Endothelial cell of umbilical vein (primary cell): ENCODE measurements at regions of chr2 and their contacts with region 1.

Region 1: DNA sequence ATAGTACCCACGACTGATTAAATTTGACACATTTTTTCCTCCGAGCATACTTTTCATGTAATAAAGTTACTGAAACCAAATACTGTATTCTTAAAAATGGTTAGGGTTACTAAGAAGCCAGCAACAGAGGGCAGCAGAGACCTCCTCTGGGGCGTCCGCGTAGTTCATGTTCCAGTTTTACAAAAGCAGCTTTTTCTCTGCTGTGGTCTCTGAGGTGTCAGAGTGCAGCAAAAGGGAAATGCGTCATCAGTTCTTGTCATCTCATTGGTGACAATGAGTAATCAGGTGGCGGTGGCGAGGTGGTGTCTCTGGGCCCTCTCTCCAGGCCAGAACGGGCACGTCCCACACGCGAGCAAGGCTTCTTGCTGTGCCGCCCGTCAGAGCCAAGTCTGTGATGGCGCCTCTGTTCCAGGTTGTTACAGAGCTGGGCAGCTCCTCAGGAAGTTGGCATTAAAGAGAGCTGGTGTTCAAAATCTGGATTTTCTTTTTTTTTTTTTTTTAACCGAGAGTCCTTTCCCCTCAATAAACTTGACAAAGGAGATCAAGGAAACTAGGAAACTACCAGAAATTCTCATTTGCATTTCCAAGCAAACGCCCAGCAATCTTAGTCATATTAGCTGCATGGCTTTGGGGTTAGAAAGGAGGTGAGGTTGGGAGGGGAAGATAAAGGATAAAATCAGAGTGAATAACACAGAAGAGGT is 98.6 kb upstream of the BZW1 start:
- DNase-seq: peak; percentile 92
- H3K4me3 ChIP-seq: peak overlapping the region in 2 of 3 experiments; percentile 4 to 34
- H3K27ac ChIP-seq: peak overlapping the region; percentile 51
- H3K4me1 ChIP-seq: peaks cover 5% of the 10 kb centered on the region
- H3K27me3 ChIP-seq: no peaks in the 10 kb centered on the region
- CTCF ChIP-seq: peak; percentile 71 to 79
- POLR2A ChIP-seq: peak; percentile 69

Region 2: GRCh38 chr2:200338701-200339100 is 374.5 kb before region 1 on chr2:
- CTCF ChIA-PET with region 1: no interaction called
- POLR2A ChIA-PET with region 1: no interaction called
- dilution Hi-C with region 1: no loop called
- intact Hi-C with region 1: no loop called
- DNase-seq: no peak
- H3K4me3 ChIP-seq: no peak overlapping the region
- H3K27ac ChIP-seq: no peak overlapping the region
- H3K4me1 ChIP-seq: peaks cover 11% of the 10 kb centered on the region
- H3K27me3 ChIP-seq: no peaks in the 10 kb centered on the region
- CTCF ChIP-seq: no peak
- POLR2A ChIP-seq: no peak

Region 3: DNA sequence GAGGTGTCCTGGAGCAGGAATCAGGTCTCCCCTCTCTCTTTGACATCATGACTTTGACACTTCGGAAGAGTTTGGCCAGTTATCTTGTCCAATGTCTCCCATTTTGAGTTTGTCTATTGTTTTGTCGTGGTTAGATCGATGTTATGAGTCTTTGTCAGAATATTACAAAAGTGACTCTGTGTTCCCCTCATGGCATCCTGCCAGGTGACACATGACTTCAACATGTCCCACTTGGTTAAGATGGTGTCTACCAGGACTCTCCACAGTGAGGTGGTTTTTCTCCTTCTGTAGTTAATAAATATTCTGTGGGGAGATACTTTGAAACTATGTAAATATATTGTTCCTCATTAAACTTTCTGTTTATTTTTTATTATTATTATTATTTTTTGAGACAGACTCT is 21.9 kb after region 1 on chr2:
- CTCF ChIA-PET with region 1: interaction called, 99 read pairs
- POLR2A ChIA-PET with region 1: no interaction called
- dilution Hi-C with region 1: no loop called
- intact Hi-C with region 1: loop called (anchors 1 kb)
- DNase-seq: no peak
- H3K4me3 ChIP-seq: no peak overlapping the region
- H3K27ac ChIP-seq: no peak overlapping the region
- H3K4me1 ChIP-seq: no peaks in the 10 kb centered on the region
- H3K27me3 ChIP-seq: peaks cover 0 to 2% of the 10 kb centered on the region in 2 experiments
- CTCF ChIP-seq: no peak
- POLR2A ChIP-seq: no peak

Region 4: GRCh38 chr2:200787348-200788120 is 74.4 kb after region 1 on chr2:
- CTCF ChIA-PET with region 1: interaction called, 7 read pairs
- POLR2A ChIA-PET with region 1: no interaction called
- dilution Hi-C with region 1: no loop called
- intact Hi-C with region 1: loop called (anchors 1 kb)
- DNase-seq: peak; percentile 95
- H3K4me3 ChIP-seq: peak overlapping the region in 1 of 3 experiments; percentile 63
- H3K27ac ChIP-seq: peak overlapping the region; percentile 99
- H3K4me1 ChIP-seq: peaks cover 43% of the 10 kb centered on the region
- H3K27me3 ChIP-seq: no peaks in the 10 kb centered on the region
- CTCF ChIP-seq: no peak
- POLR2A ChIP-seq: peak; percentile 17

Region 5: GRCh38 chr2:200850512-200851256 is 137.5 kb after region 1 on chr2:
- CTCF ChIA-PET with region 1: interaction called, 11 read pairs
- POLR2A ChIA-PET with region 1: no interaction called
- dilution Hi-C with region 1: no loop called
- intact Hi-C with region 1: no loop called
- DNase-seq: no peak
- H3K4me3 ChIP-seq: no peak overlapping the region
- H3K27ac ChIP-seq: no peak overlapping the region
- H3K4me1 ChIP-seq: no peaks in the 10 kb centered on the region
- H3K27me3 ChIP-seq: no peaks in the 10 kb centered on the region
- CTCF ChIP-seq: no peak
- POLR2A ChIP-seq: peak; percentile 36

Region 6: GRCh38 chr2:200901459-200902072 is 188.4 kb after region 1 on chr2:
- CTCF ChIA-PET with region 1: interaction called, 8 read pairs
- POLR2A ChIA-PET with region 1: no interaction called
- dilution Hi-C with region 1: no loop called
- intact Hi-C with region 1: loop called (anchors 1 kb)
- DNase-seq: peak; percentile 91
- H3K4me3 ChIP-seq: no peak overlapping the region
- H3K27ac ChIP-seq: no peak overlapping the region
- H3K4me1 ChIP-seq: no peaks in the 10 kb centered on the region
- H3K27me3 ChIP-seq: no peaks in the 10 kb centered on the region
- CTCF ChIP-seq: peak; percentile 74 to 75
- POLR2A ChIP-seq: no peak

Region 7: DNA sequence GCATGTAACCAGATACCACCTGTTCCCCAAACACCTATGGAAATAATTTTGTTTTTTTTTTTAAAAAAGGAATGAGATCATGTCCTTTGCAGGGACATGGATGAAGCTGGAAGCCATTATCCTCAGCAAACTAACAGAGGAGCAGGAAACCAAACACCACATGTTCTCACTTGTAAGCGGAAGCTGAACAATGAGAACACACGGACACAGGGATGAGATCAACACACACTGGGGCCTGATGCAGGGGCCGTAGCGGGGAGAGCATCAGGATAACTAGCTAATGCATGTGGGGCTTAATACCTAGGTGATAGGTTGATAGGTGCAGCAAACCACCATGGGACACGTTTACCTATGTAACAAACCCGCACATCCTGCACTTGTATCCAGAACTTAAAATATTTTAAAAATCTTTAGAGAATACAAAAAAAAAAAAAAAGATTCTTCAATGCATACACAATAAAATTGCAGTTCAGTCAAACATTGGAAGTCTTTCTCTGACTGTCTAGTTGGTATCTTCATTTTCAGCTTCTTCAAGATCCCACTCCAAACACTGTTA is 458.2 kb after region 1 on chr2:
- CTCF ChIA-PET with region 1: no interaction called
- POLR2A ChIA-PET with region 1: no interaction called
- dilution Hi-C with region 1: no loop called
- intact Hi-C with region 1: loop called (anchors 5 kb)
- DNase-seq: peak; percentile 64
- H3K4me3 ChIP-seq: no peak overlapping the region
- H3K27ac ChIP-seq: no peak overlapping the region
- H3K4me1 ChIP-seq: peaks cover 10% of the 10 kb centered on the region
- H3K27me3 ChIP-seq: no peaks in the 10 kb centered on the region
- CTCF ChIP-seq: no peak
- POLR2A ChIP-seq: peak; percentile 66

Region 8: GRCh38 chr2:201546576-201546975 is 833.4 kb after region 1 on chr2:
- CTCF ChIA-PET with region 1: no interaction called
- POLR2A ChIA-PET with region 1: no interaction called
- dilution Hi-C with region 1: no loop called
- intact Hi-C with region 1: no loop called
- DNase-seq: no peak
- H3K4me3 ChIP-seq: no peak overlapping the region
- H3K27ac ChIP-seq: no peak overlapping the region
- H3K4me1 ChIP-seq: no peaks in the 10 kb centered on the region
- H3K27me3 ChIP-seq: no peaks in the 10 kb centered on the region
- CTCF ChIP-seq: no peak
- POLR2A ChIP-seq: no peak